ENCODE measurements at regions of chr17 and their contacts with region 1.

Region 1: GRCh38 chr17:61635913-61636432 is 45.0 kb upstream of the NACA2 start:
- DNase-seq: peak; percentile 66
- H3K4me3 Mint-ChIP-seq: no peak overlapping the region
- H3K27ac Mint-ChIP-seq: no peak overlapping the region
- H3K4me1 Mint-ChIP-seq: no peaks in the 10 kb centered on the region
- H3K27me3 Mint-ChIP-seq: peaks cover 66% of the 10 kb centered on the region

Region 2: DNA sequence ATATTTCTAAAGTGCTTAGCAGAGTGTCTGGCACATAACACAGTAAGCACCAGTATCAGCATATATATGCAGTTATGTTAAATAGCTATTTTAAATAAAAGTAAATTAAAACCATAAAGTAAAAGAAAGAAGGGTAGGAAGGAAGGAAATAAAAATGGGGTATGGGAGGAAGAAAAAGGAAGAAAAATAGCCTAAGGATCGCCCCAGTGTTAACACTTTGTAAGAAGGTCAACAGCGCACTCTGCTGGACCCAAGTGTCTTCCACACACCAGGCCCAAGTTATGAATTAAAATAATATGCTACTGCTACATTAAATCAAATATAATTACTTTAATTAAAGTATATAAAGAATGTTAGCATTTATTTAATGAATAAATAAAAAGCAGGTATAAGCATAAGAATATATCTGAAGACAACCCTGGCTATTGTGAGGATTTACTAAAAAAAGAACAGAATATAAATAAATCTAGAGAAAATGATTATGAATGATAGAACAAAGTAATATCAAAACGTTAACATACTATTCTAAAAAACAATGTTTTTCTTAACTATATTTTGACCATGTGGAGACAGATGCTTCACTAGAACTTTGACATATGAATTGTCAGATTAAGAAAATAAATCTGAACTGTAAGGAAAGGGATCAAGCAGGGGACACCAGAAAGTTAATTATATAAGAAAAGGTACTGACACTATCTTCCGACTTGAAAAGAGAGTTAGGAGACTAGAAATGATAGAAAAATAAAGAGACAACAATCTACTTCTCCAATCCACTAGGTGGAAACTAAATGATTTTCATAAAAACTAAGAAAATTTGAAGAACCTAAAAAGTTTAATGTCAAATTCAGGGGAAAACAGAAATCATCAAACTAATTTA is 201.4 kb after region 1 on chr17:
- CTCF ChIA-PET with region 1: interaction called, 19 read pairs
- POLR2A ChIA-PET with region 1: no interaction called
- DNase-seq: peak; percentile 59
- H3K4me3 Mint-ChIP-seq: no peak overlapping the region
- H3K27ac Mint-ChIP-seq: no peak overlapping the region
- H3K4me1 Mint-ChIP-seq: no peaks in the 10 kb centered on the region
- H3K27me3 Mint-ChIP-seq: no peaks in the 10 kb centered on the region

Region 3: DNA sequence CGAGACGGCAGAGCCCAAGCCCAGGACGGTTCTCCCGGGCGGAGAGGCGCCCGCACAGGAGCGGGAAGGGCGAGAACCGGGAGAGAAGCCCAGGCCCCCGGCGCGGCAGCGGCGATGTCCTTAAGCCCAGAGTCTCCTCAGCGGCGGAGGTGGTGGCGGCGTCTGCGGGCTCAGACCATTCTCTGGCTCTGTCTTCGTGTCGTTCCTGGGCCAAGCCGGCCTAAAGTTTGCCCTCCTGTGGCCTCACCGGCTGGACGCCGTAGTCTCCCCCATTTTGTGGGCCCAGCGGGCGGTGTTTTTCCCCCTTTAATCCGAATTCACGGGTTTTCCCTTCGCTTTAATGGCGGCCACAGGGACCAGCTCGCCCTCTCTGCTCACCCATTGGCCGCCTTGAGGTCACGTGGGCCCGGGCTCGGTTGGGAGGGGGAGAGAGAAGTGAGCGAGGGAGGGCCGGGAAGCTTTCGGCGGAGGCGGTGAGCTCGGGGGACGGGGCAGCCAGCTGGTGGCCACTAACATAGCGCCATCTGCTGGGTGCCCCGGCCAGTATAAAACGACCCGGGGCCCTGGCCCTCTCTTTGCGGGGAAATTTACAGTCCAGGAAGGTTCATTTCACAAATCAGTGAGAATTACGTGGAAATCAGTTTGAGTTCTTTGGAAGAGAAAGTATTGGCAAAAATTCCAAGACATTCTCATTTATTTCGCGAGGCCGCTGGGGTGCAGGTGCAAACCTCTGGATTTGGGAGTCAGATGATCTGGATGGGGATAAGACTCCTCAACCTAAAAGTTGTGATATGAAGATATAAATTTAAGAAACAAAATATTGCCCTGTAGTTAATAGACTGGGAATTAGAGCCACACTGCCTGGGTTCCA is 429.9 kb after region 1 on chr17:
- CTCF ChIA-PET with region 1: interaction called, 10 read pairs
- POLR2A ChIA-PET with region 1: interaction called, 3 read pairs
- DNase-seq: peak; percentile 99
- H3K4me3 Mint-ChIP-seq: peak overlapping the region; percentile 91
- H3K27ac Mint-ChIP-seq: peak overlapping the region; percentile 96
- H3K4me1 Mint-ChIP-seq: peaks cover 35% of the 10 kb centered on the region
- H3K27me3 Mint-ChIP-seq: no peaks in the 10 kb centered on the region

Measured in activated CD4-positive, alpha-beta memory T cell treated with anti-CD3 and anti-CD28 coated beads, Interleukin-2, amount 10 ng/mL, durations not matched to agents 7 days and 5 days (primary cell).